ENCODE measurements at regions of chr19 and their contacts with region 1.

Region 1: DNA sequence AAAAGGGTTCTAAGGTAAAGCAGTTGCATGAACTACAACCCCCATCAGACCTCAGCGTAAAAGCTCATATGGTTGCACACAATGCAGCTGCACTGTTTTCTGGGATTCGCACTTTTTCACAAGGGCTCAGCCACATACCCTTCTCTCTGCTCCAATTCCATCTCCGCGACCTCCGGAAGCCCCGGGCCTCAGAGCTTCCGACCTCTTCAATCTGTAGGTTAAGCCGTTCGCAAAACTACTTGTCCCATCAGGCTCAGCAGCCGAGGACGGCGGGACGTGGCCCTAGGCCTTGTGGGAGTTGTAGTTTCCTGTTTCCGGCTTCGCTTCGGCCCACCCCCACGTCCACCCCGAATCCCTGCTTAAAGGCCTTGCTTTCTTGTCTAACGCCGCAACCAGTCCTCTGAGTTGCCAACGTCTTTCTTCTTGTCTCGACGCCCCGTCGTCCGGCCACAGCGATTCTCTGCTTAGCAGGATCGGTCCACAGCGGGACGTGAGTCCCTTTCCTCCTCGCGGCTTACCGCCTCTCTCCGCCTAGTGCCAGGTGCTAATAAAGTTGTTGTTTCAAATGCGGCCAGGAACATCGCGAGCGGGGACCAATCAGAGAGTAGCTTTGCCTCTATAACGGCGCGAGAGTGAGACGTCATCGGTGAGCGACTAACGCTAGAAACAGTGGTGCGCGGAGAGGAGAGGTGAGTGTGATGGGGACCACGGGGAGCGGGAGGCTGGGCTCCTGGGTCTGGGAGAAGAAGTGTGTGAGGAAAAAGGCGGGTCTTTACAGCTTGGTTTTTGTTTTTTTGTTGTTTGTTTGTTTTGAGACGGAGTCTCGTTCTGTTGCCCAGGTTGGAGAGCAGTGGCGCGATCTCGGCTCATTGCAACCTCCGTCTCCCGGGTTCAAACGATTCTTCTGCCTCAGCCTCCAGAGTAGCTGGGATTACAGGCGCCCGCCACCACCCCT is at the starts of genes PRPF31 and TFPT:
- DNase-seq: peak; percentile 95 to 98
- H3K4me3 ChIP-seq: peak within 1 kb of the TSS; percentile 43
- H3K4me3 Mint-ChIP-seq: peak within 1 kb of the TSS; percentile 95
- H3K27ac Mint-ChIP-seq: peak within 1 kb of the TSS; percentile 96
- H3K4me1 ChIP-seq: 0 out of 2 replicates have a peak, but pooled peaks cover 7% of the 10 kb centered on the region
- H3K4me1 Mint-ChIP-seq: peaks cover 16% of the 10 kb centered on the region
- H3K27me3 ChIP-seq: no peaks in the 10 kb centered on the region
- H3K27me3 Mint-ChIP-seq: no peaks in the 10 kb centered on the region
- CTCF ChIP-seq: no peak
- total RNA-seq, gene PRPF31: 95.0 and 99.0 TPM in 2 replicates
- total RNA-seq, gene TFPT: 23.0 and 26.0 TPM in 2 replicates

Region 2: DNA sequence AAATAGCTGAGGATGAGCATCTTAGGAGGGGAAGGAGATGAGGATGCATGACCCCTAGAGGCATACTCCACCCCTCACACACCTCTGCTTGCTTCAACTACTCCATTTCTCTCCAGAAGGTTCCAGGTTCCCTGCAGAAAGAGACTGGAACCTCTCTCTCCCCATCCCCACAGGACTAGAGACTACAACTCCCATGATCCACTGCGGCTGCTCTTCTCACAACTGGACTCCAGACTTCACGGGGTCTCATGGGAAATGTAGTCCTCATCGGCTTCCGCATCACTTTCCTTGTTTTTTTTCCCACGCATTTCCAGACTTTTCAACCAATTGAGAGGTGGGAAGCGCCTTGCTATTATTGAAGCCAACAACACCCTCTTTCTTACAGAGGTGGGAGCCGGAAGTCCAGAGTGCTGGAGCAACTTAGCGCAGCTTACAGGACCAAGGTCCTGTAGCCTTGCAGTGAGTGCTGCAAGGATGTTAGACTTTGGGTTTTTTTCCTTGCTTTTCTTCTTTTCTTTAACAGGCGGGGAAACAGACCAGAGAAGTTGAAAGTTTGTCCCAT is 137.9 kb before region 1 on chr19:
- CTCF ChIA-PET with region 1: no interaction called
- POLR2A ChIA-PET with region 1: no interaction called
- intact Hi-C with region 1: no loop called
- DNase-seq: peak; percentile 35 to 50
- H3K4me3 ChIP-seq: no peak overlapping the region
- H3K4me3 Mint-ChIP-seq: no peak overlapping the region
- H3K27ac Mint-ChIP-seq: no peak overlapping the region
- H3K4me1 ChIP-seq: no peaks in the 10 kb centered on the region
- H3K4me1 Mint-ChIP-seq: no peaks in the 10 kb centered on the region
- H3K27me3 ChIP-seq: no peaks in the 10 kb centered on the region
- H3K27me3 Mint-ChIP-seq: no peaks in the 10 kb centered on the region
- CTCF ChIP-seq: no peak

Region 3: DNA sequence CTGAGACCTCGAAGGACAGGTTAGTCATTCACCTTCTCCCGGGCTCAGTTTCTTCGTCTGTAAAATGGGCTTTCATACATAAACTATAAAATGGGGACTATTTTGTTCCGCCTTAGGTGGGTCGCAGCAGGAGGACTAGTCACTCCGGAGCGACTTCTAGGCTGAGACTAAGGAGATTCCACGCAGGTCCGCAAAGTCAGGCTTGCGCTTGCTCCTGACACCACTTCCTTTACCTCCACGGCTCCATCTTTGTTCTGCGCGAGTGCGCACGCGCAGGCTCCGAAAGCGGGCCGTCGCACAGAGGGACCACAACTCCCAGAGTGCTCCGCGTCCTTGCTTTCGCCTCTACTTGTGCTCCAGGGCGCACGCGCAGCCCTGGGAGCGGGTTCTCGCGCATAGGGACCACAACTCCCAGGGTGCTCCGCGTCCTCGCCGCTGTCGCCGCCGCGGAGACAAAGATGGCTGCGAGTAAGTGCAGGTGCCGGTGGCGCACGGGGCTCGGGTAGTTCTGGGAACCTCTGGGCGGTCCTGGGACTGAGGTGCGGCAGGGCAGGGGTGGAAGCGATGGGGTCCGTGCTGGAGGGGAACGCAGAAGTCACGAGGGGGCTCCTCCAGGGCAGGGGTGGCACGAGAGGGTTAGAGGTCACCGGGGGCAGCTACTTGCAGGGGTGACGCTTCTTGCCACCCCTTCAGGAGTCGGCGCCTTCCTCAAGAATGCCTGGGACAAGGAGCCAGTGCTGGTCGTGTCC is 12.8 kb before region 1 on chr19 and contains the start of gene NDUFA3:
- CTCF ChIA-PET with region 1: interaction called, 4 read pairs
- POLR2A ChIA-PET with region 1: interaction called, 3 read pairs
- intact Hi-C with region 1: loop called (anchors 1 kb)
- DNase-seq: peak; percentile 99
- H3K4me3 ChIP-seq: peak within 1 kb of the TSS; percentile 85
- H3K4me3 Mint-ChIP-seq: peak within 1 kb of the TSS; percentile 92
- H3K27ac Mint-ChIP-seq: peak within 1 kb of the TSS; percentile 90
- H3K4me1 ChIP-seq: no peaks in the 10 kb centered on the region
- H3K4me1 Mint-ChIP-seq: peaks cover 10% of the 10 kb centered on the region
- H3K27me3 ChIP-seq: no peaks in the 10 kb centered on the region
- H3K27me3 Mint-ChIP-seq: no peaks in the 10 kb centered on the region
- CTCF ChIP-seq: no peak
- total RNA-seq, gene NDUFA3: 185 and 196 TPM in 2 replicates

Region 4: DNA sequence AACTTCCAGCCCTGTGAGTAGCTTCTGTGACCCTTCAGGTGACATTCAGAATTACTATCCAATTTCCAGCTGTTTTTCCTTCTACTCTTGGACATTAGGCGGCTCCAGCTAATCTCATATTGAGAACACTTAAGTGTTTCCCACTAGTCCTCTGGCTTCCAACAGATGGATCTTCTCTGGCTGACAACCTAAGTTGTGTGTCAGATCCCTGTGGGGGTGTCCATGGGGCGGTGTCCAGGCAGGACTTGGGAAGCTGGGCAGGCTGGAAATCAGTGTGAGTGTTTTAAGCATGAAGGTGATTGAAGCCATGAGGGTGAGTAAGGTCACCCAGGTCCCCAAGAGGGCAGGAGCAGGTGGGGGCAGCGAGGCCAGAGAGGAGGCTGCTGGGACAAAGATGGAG is 32.3 kb after region 1 on chr19:
- CTCF ChIA-PET with region 1: no interaction called
- POLR2A ChIA-PET with region 1: no interaction called
- intact Hi-C with region 1: no loop called
- DNase-seq: no peak
- H3K4me3 ChIP-seq: no peak overlapping the region
- H3K4me3 Mint-ChIP-seq: no peak overlapping the region
- H3K27ac Mint-ChIP-seq: no peak overlapping the region
- H3K4me1 ChIP-seq: no peaks in the 10 kb centered on the region
- H3K4me1 Mint-ChIP-seq: no peaks in the 10 kb centered on the region
- H3K27me3 ChIP-seq: no peaks in the 10 kb centered on the region
- H3K27me3 Mint-ChIP-seq: no peaks in the 10 kb centered on the region
- CTCF ChIP-seq: peak in 1 of 2 experiments; percentile 12